ENCODE measurements at regions of chr6 and their contacts with region 1.

Region 1: DNA sequence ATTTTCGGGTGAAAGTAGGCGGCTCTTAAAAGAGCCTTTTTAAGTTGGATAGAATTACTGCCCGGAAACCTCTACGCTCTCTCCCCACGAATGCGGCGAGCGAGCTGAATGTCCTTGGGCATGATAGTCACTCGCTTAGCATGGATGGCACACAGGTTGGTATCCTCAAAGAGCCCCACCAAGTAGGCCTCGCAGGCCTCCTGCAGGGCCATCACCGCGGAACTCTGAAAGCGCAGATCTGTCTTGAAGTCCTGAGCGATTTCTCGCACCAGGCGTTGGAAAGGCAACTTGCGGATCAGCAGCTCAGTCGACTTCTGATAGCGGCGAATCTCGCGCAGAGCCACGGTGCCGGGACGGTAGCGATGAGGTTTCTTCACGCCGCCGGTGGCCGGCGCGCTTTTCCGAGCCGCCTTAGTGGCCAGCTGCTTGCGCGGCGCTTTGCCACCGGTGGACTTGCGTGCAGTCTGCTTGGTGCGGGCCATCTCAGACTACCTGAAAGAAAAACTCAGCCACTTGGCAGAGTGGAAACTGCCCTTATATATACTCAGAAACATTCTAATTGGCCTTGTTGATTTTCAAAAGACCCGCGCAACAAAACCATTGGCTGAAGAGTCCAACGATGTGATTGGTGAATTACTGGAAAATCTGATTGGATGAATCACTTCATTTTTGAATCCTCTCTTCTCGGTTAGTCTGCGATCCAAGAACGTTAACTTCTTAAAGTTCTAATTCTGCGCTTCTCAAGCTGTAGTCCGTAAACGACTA is 93.9 kb upstream of the BTN3A2 start:
- DNase-seq: peak; percentile 87
- H3K4me3 ChIP-seq: peak overlapping the region; percentile 66 to 75
- H3K27ac ChIP-seq: peak overlapping the region; percentile 84 to 99
- H3K4me1 ChIP-seq: peaks cover 0 to 14% of the 10 kb centered on the region in 2 experiments; a peak in 2 of 4 replicates
- H3K27me3 ChIP-seq: no peaks in the 10 kb centered on the region
- CTCF ChIP-seq: no peak
- EP300 ChIP-seq: peak in 1 of 2 experiments; percentile 40; a peak in 1 of 4 replicates
- RAD21 ChIP-seq: no peak

Region 2: DNA sequence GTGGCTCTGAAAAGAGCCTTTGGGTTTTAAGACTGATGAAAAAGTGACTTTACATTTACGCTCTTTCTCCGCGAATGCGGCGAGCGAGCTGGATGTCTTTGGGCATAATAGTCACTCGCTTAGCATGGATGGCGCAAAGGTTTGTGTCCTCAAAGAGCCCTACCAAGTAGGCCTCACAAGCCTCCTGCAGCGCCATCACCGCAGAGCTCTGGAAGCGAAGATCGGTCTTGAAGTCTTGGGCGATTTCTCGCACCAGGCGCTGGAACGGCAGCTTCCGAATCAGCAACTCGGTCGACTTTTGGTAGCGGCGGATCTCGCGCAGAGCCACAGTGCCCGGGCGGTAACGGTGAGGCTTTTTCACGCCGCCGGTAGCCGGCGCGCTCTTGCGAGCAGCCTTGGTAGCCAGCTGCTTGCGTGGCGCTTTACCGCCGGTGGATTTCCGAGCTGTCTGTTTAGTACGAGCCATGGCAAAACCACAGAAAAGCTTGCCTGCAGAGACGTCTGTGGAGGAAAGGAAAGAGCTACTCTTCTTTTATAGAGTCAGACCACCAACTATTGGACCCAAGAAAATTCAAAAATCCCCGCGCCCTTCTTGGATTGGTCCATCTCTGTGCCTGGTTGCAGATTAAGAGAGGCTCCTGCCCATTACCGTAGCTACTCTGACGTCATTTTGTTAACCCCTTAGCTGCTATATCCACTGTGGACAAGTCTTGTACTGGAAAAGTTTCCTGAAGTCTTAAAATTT is 239.3 kb before region 1 on chr6:
- CTCF ChIA-PET with region 1: interaction called, 5 read pairs
- POLR2A ChIA-PET with region 1: interaction called, 10 read pairs
- DNase-seq: peak; percentile 89
- H3K4me3 ChIP-seq: peak overlapping the region; percentile 73 to 84
- H3K27ac ChIP-seq: peak overlapping the region; percentile 92 to 99
- H3K4me1 ChIP-seq: peaks cover 10 to 23% of the 10 kb centered on the region in 2 experiments; a peak in 3 of 4 replicates
- H3K27me3 ChIP-seq: no peaks in the 10 kb centered on the region
- CTCF ChIP-seq: peak; percentile 30
- EP300 ChIP-seq: peak; percentile 52 to 61; a peak in 2 of 4 replicates
- RAD21 ChIP-seq: no peak

Region 3: GRCh38 chr6:26183581-26184366 is 87.3 kb before region 1 on chr6:
- CTCF ChIA-PET with region 1: no interaction called
- POLR2A ChIA-PET with region 1: interaction called, 10 read pairs
- DNase-seq: peak; percentile 71
- H3K4me3 ChIP-seq: peak overlapping the region; percentile 49 to 56
- H3K27ac ChIP-seq: peak overlapping the region; percentile 62 to 97
- H3K4me1 ChIP-seq: peaks cover 4 to 6% of the 10 kb centered on the region in 2 experiments; a peak in 2 of 4 replicates
- H3K27me3 ChIP-seq: no peaks in the 10 kb centered on the region
- CTCF ChIP-seq: no peak
- EP300 ChIP-seq: peak in 1 of 2 experiments; percentile 39; a peak in 1 of 4 replicates
- RAD21 ChIP-seq: no peak

Region 4: GRCh38 chr6:26204332-26205165 is 66.5 kb before region 1 on chr6:
- CTCF ChIA-PET with region 1: no interaction called
- POLR2A ChIA-PET with region 1: interaction called, 29 read pairs
- DNase-seq: peak; percentile 83
- H3K4me3 ChIP-seq: peak overlapping the region; percentile 69 to 95
- H3K27ac ChIP-seq: peak overlapping the region; percentile 97 to 99
- H3K4me1 ChIP-seq: peaks cover 4 to 13% of the 10 kb centered on the region in 2 experiments; a peak in 3 of 4 replicates
- H3K27me3 ChIP-seq: no peaks in the 10 kb centered on the region
- CTCF ChIP-seq: peak; percentile 49
- EP300 ChIP-seq: peak; percentile 88 to 97
- RAD21 ChIP-seq: no peak

Region 5: DNA sequence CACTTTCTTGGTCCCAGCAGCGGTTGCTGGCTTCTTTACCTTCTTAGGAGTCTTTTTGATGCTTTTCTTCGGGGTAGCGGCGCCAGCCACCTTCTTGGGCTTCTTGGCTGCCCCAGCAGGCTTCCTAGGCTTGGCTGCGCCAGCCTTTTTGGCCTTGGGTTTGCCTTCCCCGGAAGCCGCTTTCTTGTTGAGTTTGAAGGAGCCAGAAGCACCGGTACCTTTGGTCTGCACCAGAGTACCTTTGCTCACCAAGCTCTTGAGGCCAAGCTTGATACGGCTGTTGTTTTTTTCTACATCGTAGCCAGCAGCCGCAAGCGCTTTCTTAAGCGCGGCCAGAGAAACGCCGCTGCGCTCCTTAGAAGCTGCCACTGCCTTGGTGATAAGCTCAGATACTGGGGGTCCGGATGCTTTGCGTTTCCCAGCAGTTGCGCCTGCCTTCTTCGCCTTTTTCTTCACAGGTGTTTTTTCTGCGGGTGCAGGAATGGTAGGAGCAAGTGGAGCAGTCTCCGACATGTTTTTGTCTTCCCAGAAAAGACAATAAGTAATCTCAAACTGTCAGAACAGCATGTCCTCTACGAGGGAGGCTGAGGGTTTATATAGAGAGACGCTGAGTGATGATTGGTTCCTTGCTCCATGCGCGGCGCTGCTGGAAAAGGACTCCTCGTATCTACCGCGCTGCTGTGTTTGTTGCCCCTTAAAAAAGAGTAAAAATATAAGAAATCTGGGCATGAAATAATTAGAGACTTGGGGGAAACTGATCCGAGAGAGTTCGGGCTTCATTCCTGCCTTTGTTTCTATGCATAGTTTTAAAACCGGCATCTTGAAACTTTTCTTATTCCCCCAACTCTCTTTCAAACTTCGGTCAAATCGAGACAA is 36.4 kb before region 1 on chr6:
- CTCF ChIA-PET with region 1: interaction called, 4 read pairs
- POLR2A ChIA-PET with region 1: interaction called, 54 read pairs
- DNase-seq: peak; percentile 73
- H3K4me3 ChIP-seq: peak overlapping the region; percentile 61 to 72
- H3K27ac ChIP-seq: peak overlapping the region; percentile 77 to 85
- H3K4me1 ChIP-seq: peaks cover 0 to 3% of the 10 kb centered on the region in 2 experiments; a peak in 3 of 4 replicates
- H3K27me3 ChIP-seq: no peaks in the 10 kb centered on the region
- CTCF ChIP-seq: no peak
- EP300 ChIP-seq: peak in 1 of 2 experiments; percentile 52; a peak in 1 of 4 replicates
- RAD21 ChIP-seq: no peak

Region 6: GRCh38 chr6:26285143-26286134 is 14.4 kb after region 1 on chr6:
- CTCF ChIA-PET with region 1: interaction called, 7 read pairs
- POLR2A ChIA-PET with region 1: interaction called, 132 read pairs
- DNase-seq: peak; percentile 80
- H3K4me3 ChIP-seq: peak overlapping the region; percentile 78 to 89
- H3K27ac ChIP-seq: peak overlapping the region; percentile 95 to 98
- H3K4me1 ChIP-seq: no peaks in the 10 kb centered on the region; a peak in 2 of 4 replicates
- H3K27me3 ChIP-seq: no peaks in the 10 kb centered on the region
- CTCF ChIP-seq: no peak
- EP300 ChIP-seq: peak; percentile 84 to 99
- RAD21 ChIP-seq: 0 out of 2 replicates have a peak, but pooled peaks have one; percentile 4

Region 7: GRCh38 chr6:27864906-27865849 is 1594.1 kb after region 1 on chr6:
- CTCF ChIA-PET with region 1: no interaction called
- POLR2A ChIA-PET with region 1: interaction called, 13 read pairs
- DNase-seq: peak; percentile 85
- H3K4me3 ChIP-seq: peak overlapping the region; percentile 47 to 80
- H3K27ac ChIP-seq: peak overlapping the region; percentile 80 to 97
- H3K4me1 ChIP-seq: peaks cover 0 to 20% of the 10 kb centered on the region in 2 experiments; a peak in 2 of 4 replicates
- H3K27me3 ChIP-seq: no peaks in the 10 kb centered on the region
- CTCF ChIP-seq: no peak
- EP300 ChIP-seq: no peak; a peak in 1 of 4 replicates
- RAD21 ChIP-seq: no peak